Activated B cell treated with CpG ODN at 0.5 μM for 24 hours (primary cell): ENCODE measurements at regions of chr5 and their contacts with region 1.

Region 1: GRCh38 chr5:134758504-134759341 is at the start of gene DDX46:
- DNase-seq: peak; percentile 95
- ATAC-seq: peak; percentile 99
- H3K4me3 Mint-ChIP-seq: peak within 1 kb of the TSS; percentile 100
- H3K27ac Mint-ChIP-seq: peak within 1 kb of the TSS; percentile 94
- H3K4me1 Mint-ChIP-seq: peaks cover 36% of the 10 kb centered on the region
- H3K27me3 Mint-ChIP-seq: no peaks in the 10 kb centered on the region
- CTCF ChIP-seq: no peak
- total RNA-seq, gene DDX46: 68.8 and 74.1 TPM in 2 replicates

Region 2: DNA sequence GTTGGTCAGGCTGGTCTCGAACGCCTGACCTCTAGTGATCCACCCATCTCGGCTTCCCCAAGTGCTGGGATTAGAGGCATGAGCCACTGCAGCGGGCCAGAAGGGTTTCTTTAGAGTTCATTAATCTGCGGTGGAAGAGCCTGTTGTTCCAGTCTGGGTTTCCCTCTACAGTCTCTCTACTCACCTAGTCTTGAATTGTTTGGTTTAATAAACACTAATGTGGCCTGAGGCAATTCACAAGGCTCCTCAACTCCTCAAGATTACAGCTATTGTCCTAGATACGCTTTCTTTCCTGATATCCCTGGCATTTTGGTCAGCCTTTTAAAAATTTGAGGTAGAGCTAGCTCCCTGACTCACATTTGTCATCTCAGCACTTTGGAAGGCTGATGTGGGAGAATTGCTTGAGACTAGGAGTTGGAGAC is 121.6 kb before region 1 on chr5:
- CTCF ChIA-PET with region 1: no interaction called
- POLR2A ChIA-PET with region 1: no interaction called
- intact Hi-C with region 1: loop called (anchors 1 kb)
- DNase-seq: no peak
- ATAC-seq: no peak
- H3K4me3 Mint-ChIP-seq: no peak overlapping the region
- H3K27ac Mint-ChIP-seq: no peak overlapping the region
- H3K4me1 Mint-ChIP-seq: peaks cover 2% of the 10 kb centered on the region
- H3K27me3 Mint-ChIP-seq: no peaks in the 10 kb centered on the region
- CTCF ChIP-seq: no peak

Region 3: GRCh38 chr5:134648425-134649162 is 110.1 kb before region 1 on chr5 and contains the start of gene SEC24A:
- CTCF ChIA-PET with region 1: no interaction called
- POLR2A ChIA-PET with region 1: no interaction called
- intact Hi-C with region 1: loop called (anchors 1 kb)
- DNase-seq: peak; percentile 86
- ATAC-seq: peak; percentile 77
- H3K4me3 Mint-ChIP-seq: peak within 1 kb of the TSS; percentile 91
- H3K27ac Mint-ChIP-seq: peak within 1 kb of the TSS; percentile 96
- H3K4me1 Mint-ChIP-seq: peaks cover 22% of the 10 kb centered on the region
- H3K27me3 Mint-ChIP-seq: no peaks in the 10 kb centered on the region
- CTCF ChIP-seq: no peak
- total RNA-seq, gene SEC24A: 13.8 and 15.6 TPM in 2 replicates

Region 4: GRCh38 chr5:134873987-134874830 is 115.5 kb after region 1 on chr5 and contains the start of gene TXNDC15:
- CTCF ChIA-PET with region 1: no interaction called
- POLR2A ChIA-PET with region 1: no interaction called
- intact Hi-C with region 1: loop called (anchors 1 kb)
- DNase-seq: peak; percentile 78
- ATAC-seq: peak; percentile 93
- H3K4me3 Mint-ChIP-seq: peak within 1 kb of the TSS; percentile 95
- H3K27ac Mint-ChIP-seq: peak within 1 kb of the TSS; percentile 94
- H3K4me1 Mint-ChIP-seq: peaks cover 34% of the 10 kb centered on the region
- H3K27me3 Mint-ChIP-seq: no peaks in the 10 kb centered on the region
- CTCF ChIP-seq: no peak
- total RNA-seq, gene TXNDC15: 26.6 and 30.7 TPM in 2 replicates

Region 5: DNA sequence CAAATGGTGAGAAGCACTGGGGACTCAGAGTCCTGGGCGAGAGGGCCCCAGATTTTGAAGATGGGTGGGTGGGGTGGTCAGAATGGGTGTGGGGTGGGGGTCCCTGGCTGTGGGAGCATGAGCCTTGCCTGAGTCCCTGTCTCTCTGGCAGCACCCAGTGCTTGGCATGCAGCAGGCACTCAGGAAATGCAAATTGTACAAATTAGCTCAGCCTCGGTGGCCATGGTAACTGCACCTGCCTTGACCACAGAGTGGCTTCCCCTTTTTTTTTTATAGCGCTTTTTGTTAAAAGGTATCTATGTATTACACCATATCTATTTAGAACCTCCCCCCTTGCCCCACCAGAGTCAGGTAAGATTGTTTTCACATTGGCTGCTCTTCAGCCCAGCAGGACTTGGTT is 294.6 kb after region 1 on chr5:
- CTCF ChIA-PET with region 1: no interaction called
- POLR2A ChIA-PET with region 1: no interaction called
- intact Hi-C with region 1: loop called (anchors 10 kb)
- DNase-seq: peak; percentile 53
- ATAC-seq: peak; percentile 95
- H3K4me3 Mint-ChIP-seq: peak overlapping the region; percentile 67
- H3K27ac Mint-ChIP-seq: peak overlapping the region; percentile 78
- H3K4me1 Mint-ChIP-seq: peaks cover 49% of the 10 kb centered on the region
- H3K27me3 Mint-ChIP-seq: peaks cover 41% of the 10 kb centered on the region
- CTCF ChIP-seq: no peak